ENCODE measurements at regions of chr6 and their contacts with region 1.

Region 1: GRCh38 chr6:156517088-156517487 is 260.1 kb upstream of the ARID1B start:
- DNase-seq: no peak
- H3K4me3 ChIP-seq: no peak overlapping the region
- H3K27ac ChIP-seq: no peak overlapping the region
- H3K4me1 ChIP-seq: no peaks in the 10 kb centered on the region
- H3K27me3 ChIP-seq: no peaks in the 10 kb centered on the region
- CTCF ChIP-seq: no peak

Region 2: GRCh38 chr6:155909710-155910109 is 607.4 kb before region 1 on chr6:
- CTCF ChIA-PET with region 1: no interaction called
- dilution Hi-C with region 1: loop called (anchors 10 kb)
- in situ Hi-C with region 1: no loop called
- intact Hi-C with region 1: no loop called
- DNase-seq: no peak
- H3K4me3 ChIP-seq: no peak overlapping the region
- H3K27ac ChIP-seq: no peak overlapping the region
- H3K4me1 ChIP-seq: no peaks in the 10 kb centered on the region
- H3K27me3 ChIP-seq: no peaks in the 10 kb centered on the region
- CTCF ChIP-seq: no peak

Region 3: DNA sequence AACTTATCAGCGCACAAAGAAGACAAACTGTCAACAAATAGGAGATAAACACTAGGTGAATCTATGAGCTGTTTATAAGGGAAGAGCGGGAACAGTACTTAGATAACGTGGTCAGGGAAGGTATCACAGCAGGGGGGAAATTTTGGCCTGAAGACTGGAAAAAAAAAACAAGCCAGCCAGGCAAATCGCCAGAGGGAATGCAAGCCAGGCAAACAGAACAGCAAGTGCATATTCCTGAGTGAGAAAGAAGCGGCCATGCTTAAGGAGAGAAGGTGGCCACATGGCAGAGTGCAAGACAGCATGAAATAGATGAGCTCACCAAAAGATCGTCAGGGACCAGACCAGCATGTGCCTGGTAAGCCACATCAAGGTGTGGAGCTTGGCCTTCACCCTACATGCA is 206.4 kb before region 1 on chr6:
- CTCF ChIA-PET with region 1: no interaction called
- dilution Hi-C with region 1: no loop called
- in situ Hi-C with region 1: no loop called
- intact Hi-C with region 1: no loop called
- DNase-seq: no peak
- H3K4me3 ChIP-seq: no peak overlapping the region
- H3K27ac ChIP-seq: no peak overlapping the region
- H3K4me1 ChIP-seq: no peaks in the 10 kb centered on the region
- H3K27me3 ChIP-seq: no peaks in the 10 kb centered on the region
- CTCF ChIP-seq: no peak

Measured in mammary epithelial cell (primary cell).